GM12878 (cell line): ENCODE measurements at regions of chr7 and their contacts with region 1.

Region 1: DNA sequence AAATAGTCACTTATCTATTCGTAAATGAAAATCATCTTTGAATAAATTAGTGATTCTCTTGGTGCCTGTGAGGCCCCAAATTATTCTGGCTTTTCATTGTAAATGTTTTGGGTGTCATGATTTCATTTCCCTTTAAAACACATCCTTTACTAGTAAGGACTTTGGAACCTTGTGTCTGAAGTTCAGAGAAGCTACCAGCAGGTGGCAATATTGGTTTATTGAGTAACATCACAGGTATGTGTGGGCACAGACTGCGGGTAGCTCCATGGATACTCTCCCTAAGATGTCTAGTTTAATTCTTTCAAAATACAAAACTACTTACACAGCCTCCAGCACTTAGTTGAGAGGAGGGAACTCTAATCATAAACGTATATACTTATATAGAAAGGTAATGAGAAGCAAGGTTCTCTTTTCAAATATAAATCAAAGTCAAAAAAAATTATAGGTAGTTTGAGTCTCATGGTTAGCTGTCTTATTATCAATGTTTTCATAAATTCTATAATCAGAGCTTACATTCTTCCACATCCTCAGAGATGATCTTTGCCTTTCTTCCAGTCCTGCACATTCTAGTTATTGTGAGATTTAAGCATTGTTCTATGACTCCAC is 449.6 kb downstream of the GRM8 start:
- DNase-seq: peak; percentile 53
- ATAC-seq: peak; percentile 98
- H3K4me3 ChIP-seq: no peak overlapping the region
- H3K27ac ChIP-seq: no peak overlapping the region
- H3K4me1 ChIP-seq: no peaks in the 10 kb centered on the region
- H3K27me3 ChIP-seq: no peaks in the 10 kb centered on the region
- CTCF ChIP-seq: peak; percentile 63 to 78 (median 73)
- EP300 ChIP-seq: no peak
- POLR2A ChIP-seq: no peak
- RAD21 ChIP-seq: peak; percentile 86

Region 2: GRCh38 chr7:126150278-126150958 is 652.7 kb before region 1 on chr7:
- CTCF ChIA-PET with region 1: no interaction called
- POLR2A ChIA-PET with region 1: no interaction called
- RAD21 ChIA-PET with region 1: no interaction called
- SMC1A ChIA-PET with region 1: no interaction called
- in situ Hi-C with region 1: no loop called
- intact Hi-C with region 1: no loop called
- DNase-seq: no peak
- ATAC-seq: no peak
- H3K4me3 ChIP-seq: no peak overlapping the region
- H3K27ac ChIP-seq: no peak overlapping the region
- H3K4me1 ChIP-seq: no peaks in the 10 kb centered on the region
- H3K27me3 ChIP-seq: no peaks in the 10 kb centered on the region
- CTCF ChIP-seq: no peak
- EP300 ChIP-seq: no peak
- POLR2A ChIP-seq: no peak
- RAD21 ChIP-seq: no peak

Region 3: GRCh38 chr7:126436213-126436868 is 366.8 kb before region 1 on chr7:
- CTCF ChIA-PET with region 1: no interaction called
- POLR2A ChIA-PET with region 1: no interaction called
- RAD21 ChIA-PET with region 1: no interaction called
- SMC1A ChIA-PET with region 1: no interaction called
- in situ Hi-C with region 1: no loop called
- intact Hi-C with region 1: no loop called
- DNase-seq: no peak
- ATAC-seq: no peak
- H3K4me3 ChIP-seq: no peak overlapping the region
- H3K27ac ChIP-seq: no peak overlapping the region
- H3K4me1 ChIP-seq: no peaks in the 10 kb centered on the region
- H3K27me3 ChIP-seq: no peaks in the 10 kb centered on the region
- CTCF ChIP-seq: no peak
- EP300 ChIP-seq: no peak
- POLR2A ChIP-seq: no peak
- RAD21 ChIP-seq: no peak

Region 4: DNA sequence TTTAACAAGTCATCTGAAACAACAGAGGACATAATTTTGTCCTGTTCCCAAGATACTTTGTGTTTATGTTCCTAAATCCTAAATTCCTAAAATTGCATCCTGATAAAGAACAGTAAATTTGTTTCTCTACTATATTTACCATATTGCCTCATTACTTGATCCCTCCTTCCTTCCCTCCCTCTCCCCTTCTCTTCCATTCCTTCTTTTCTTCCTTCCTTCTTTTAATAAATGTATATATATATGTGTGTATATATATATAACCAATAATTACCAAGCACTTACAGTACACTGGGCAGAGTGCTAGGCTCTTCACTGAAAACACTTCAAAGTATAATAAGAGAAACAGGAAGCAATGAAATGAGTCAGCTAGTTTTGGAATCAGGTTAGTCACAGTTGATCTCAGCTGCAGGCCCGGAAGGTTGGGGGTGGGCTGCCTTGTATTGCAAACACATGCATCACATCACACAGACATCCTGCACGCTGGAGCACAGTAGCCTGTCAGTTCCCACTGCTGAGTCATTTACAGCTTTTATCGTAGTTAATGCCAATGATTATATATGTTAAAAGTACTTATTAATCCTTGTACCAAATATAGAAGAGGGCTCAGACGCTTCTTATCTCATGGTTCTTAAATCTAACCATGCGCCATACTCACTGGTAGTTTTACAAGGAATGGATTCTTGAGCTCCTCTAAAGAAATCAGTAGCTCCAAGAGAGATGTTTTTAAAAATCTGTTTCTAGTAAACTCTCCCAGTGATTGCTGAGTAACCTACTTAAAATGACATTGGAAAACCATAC is 102.2 kb before region 1 on chr7:
- CTCF ChIA-PET with region 1: interaction called, 13 read pairs
- POLR2A ChIA-PET with region 1: no interaction called
- RAD21 ChIA-PET with region 1: interaction called, 15 read pairs
- SMC1A ChIA-PET with region 1: interaction called, 26 read pairs
- in situ Hi-C with region 1: no loop called
- intact Hi-C with region 1: loop called (anchors 2 kb)
- DNase-seq: peak; percentile 98
- ATAC-seq: peak; percentile 89
- H3K4me3 ChIP-seq: 0 out of 2 replicates have a peak overlapping the region, but pooled peaks have one; percentile 35
- H3K27ac ChIP-seq: peak overlapping the region; percentile 96
- H3K4me1 ChIP-seq: peaks cover 31% of the 10 kb centered on the region
- H3K27me3 ChIP-seq: no peaks in the 10 kb centered on the region
- CTCF ChIP-seq: no peak
- EP300 ChIP-seq: peak; percentile 97 to 99
- POLR2A ChIP-seq: peak; percentile 77
- RAD21 ChIP-seq: peak; percentile 28

Region 5: DNA sequence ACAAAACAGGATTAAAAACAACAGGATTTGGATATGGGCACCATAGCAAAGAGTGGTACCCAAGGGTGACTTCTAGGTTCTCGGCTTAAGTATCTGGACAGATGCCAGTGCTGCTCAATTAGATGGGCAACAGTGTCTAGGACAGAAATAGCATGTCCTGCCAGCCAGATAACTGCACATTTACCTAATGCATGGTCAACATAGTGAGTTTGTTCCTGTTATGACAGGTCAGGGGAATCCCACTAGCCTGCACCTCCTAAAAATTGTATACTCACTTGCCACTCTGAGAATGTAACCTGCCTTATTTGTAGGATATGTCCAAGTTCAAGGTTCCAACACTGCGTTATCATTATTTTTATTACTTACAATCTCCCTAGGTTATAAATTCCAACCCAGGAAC is 22.2 kb before region 1 on chr7:
- CTCF ChIA-PET with region 1: interaction called, 17 read pairs
- POLR2A ChIA-PET with region 1: no interaction called
- RAD21 ChIA-PET with region 1: no interaction called
- SMC1A ChIA-PET with region 1: interaction called, 3 read pairs
- in situ Hi-C with region 1: no loop called
- intact Hi-C with region 1: no loop called
- DNase-seq: peak; percentile 39
- ATAC-seq: peak; percentile 95
- H3K4me3 ChIP-seq: no peak overlapping the region
- H3K27ac ChIP-seq: no peak overlapping the region
- H3K4me1 ChIP-seq: no peaks in the 10 kb centered on the region
- H3K27me3 ChIP-seq: no peaks in the 10 kb centered on the region
- CTCF ChIP-seq: no peak
- EP300 ChIP-seq: no peak
- POLR2A ChIP-seq: no peak
- RAD21 ChIP-seq: no peak

Region 6: GRCh38 chr7:126996659-126997058 is 193.5 kb after region 1 on chr7:
- CTCF ChIA-PET with region 1: no interaction called
- POLR2A ChIA-PET with region 1: no interaction called
- RAD21 ChIA-PET with region 1: no interaction called
- SMC1A ChIA-PET with region 1: no interaction called
- in situ Hi-C with region 1: no loop called
- intact Hi-C with region 1: no loop called
- DNase-seq: no peak
- ATAC-seq: no peak
- H3K4me3 ChIP-seq: no peak overlapping the region
- H3K27ac ChIP-seq: no peak overlapping the region
- H3K4me1 ChIP-seq: no peaks in the 10 kb centered on the region
- H3K27me3 ChIP-seq: no peaks in the 10 kb centered on the region
- CTCF ChIP-seq: no peak
- EP300 ChIP-seq: no peak
- POLR2A ChIP-seq: no peak
- RAD21 ChIP-seq: no peak

Region 7: DNA sequence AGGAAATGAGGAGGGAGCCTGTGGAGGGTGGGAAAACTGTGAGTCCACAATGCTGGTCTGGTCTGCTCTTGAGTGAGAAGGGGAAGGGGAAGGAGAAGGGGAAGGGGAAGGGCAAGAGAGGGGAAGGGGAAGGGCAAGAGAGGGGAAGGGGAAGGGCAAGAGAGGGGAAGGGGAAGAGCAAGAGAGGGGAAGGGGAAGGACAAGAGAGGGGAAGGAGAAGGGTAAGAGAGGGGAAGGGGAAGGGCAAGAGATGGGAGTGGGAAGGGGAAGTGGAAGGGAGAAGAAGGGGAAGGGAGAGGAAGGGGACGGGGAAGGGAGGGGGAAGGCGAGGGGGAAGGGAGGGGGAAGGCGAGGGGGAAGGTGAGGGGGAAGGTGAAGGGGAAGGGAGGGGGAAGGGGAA is 236.4 kb after region 1 on chr7:
- CTCF ChIA-PET with region 1: no interaction called
- POLR2A ChIA-PET with region 1: no interaction called
- RAD21 ChIA-PET with region 1: no interaction called
- SMC1A ChIA-PET with region 1: no interaction called
- in situ Hi-C with region 1: no loop called
- intact Hi-C with region 1: no loop called
- DNase-seq: no peak
- ATAC-seq: no peak
- H3K4me3 ChIP-seq: no peak overlapping the region
- H3K27ac ChIP-seq: no peak overlapping the region
- H3K4me1 ChIP-seq: no peaks in the 10 kb centered on the region
- H3K27me3 ChIP-seq: no peaks in the 10 kb centered on the region
- CTCF ChIP-seq: no peak
- EP300 ChIP-seq: no peak
- POLR2A ChIP-seq: no peak
- RAD21 ChIP-seq: no peak

Region 8: DNA sequence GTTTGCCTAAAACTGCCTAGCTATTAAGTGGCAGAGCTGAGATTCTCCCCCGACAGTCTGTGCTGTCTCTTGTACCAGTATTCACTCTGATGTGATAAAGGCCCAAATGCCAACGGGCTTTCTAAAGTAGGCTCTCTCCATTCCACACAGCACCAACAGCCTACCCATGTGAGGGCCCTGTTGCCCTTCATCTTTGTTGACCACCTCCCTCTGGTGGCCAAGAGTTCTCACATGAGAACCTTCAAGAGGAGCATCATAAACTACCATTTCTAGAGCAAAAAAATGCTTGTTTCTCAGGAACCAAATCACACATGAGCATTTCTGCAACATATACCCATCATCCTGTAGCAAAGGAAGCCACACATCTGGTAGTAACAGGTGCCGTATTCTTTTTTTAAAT is 263.8 kb after region 1 on chr7:
- CTCF ChIA-PET with region 1: no interaction called
- POLR2A ChIA-PET with region 1: no interaction called
- RAD21 ChIA-PET with region 1: interaction called, 3 read pairs
- SMC1A ChIA-PET with region 1: no interaction called
- in situ Hi-C with region 1: no loop called
- intact Hi-C with region 1: loop called (anchors 1 kb)
- DNase-seq: no peak
- ATAC-seq: peak; percentile 57; the same call in 2 of the 3 replicates
- H3K4me3 ChIP-seq: no peak overlapping the region
- H3K27ac ChIP-seq: no peak overlapping the region
- H3K4me1 ChIP-seq: no peaks in the 10 kb centered on the region
- H3K27me3 ChIP-seq: no peaks in the 10 kb centered on the region
- CTCF ChIP-seq: 0 out of 6 replicates have a peak, but pooled peaks of 1 of the 3 experiments have one; percentile 16
- EP300 ChIP-seq: no peak
- POLR2A ChIP-seq: no peak
- RAD21 ChIP-seq: 0 out of 2 replicates have a peak, but pooled peaks have one; percentile 18

Region 9: DNA sequence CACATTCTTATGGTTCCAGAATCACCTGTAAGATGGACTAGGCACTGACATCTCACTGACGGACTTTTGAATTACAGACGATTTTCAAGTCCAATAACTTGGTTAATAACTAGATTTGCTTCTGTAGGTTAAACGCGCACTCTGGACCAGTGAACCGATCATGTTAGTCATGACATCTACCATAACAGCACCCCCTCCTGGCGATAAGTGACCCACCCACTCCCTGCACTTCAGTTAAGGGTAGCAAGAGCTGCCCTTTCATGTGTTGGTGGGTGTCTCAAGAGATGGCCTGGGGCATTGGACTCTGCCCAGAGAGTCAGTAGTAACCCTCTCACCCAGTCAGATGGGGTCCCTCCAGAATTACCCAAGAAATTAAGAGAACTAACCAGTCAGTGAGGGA is 436.7 kb after region 1 on chr7:
- CTCF ChIA-PET with region 1: interaction called, 7 read pairs
- POLR2A ChIA-PET with region 1: no interaction called
- RAD21 ChIA-PET with region 1: no interaction called
- SMC1A ChIA-PET with region 1: no interaction called
- in situ Hi-C with region 1: no loop called
- intact Hi-C with region 1: loop called (anchors 5 kb)
- DNase-seq: no peak
- ATAC-seq: peak; percentile 54; the same call in 2 of the 3 replicates
- H3K4me3 ChIP-seq: no peak overlapping the region
- H3K27ac ChIP-seq: no peak overlapping the region
- H3K4me1 ChIP-seq: no peaks in the 10 kb centered on the region
- H3K27me3 ChIP-seq: peaks cover 0 to 2% of the 10 kb centered on the region in 2 experiments; a peak in 1 of 4 replicates
- CTCF ChIP-seq: peak in 2 of 3 experiments; percentile 22 to 35; a peak in 4 of 6 replicates
- EP300 ChIP-seq: no peak
- POLR2A ChIP-seq: no peak
- RAD21 ChIP-seq: no peak

Region 10: DNA sequence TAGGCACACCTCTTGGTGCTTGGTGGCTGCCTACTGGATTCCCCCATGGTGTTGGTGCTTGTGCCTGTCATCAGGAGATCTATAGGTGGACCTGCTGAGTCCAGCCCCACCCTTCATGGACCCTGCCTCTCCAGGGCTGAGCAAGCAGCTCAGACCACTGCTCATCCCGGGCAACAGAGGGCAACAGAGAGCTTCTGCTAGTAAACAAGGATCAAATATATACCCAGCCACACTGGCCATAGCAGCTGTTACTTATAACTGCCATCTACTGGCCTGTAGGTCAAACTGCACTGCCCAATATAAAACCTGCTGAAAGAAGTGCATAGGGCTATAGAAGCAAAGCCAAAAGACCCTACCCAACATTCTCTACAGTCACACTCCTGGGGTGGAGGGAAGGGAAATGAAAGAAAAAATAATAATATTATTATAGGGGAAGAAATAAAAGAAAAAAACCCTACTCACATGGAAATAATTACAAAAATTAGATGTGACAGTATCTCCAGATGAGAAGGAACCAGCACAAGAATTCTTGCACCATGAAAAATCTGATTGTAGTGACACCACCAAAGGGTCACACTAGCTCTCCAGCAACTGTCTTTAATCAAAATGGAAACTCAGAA is 644.3 kb after region 1 on chr7:
- CTCF ChIA-PET with region 1: interaction called, 7 read pairs
- POLR2A ChIA-PET with region 1: no interaction called
- RAD21 ChIA-PET with region 1: no interaction called
- SMC1A ChIA-PET with region 1: no interaction called
- in situ Hi-C with region 1: no loop called
- intact Hi-C with region 1: loop called (anchors 5 kb)
- DNase-seq: peak; percentile 28
- ATAC-seq: peak; percentile 100
- H3K4me3 ChIP-seq: no peak overlapping the region
- H3K27ac ChIP-seq: no peak overlapping the region
- H3K4me1 ChIP-seq: no peaks in the 10 kb centered on the region
- H3K27me3 ChIP-seq: no peaks in the 10 kb centered on the region
- CTCF ChIP-seq: peak; percentile 64 to 85 (median 77)
- EP300 ChIP-seq: no peak
- POLR2A ChIP-seq: no peak
- RAD21 ChIP-seq: peak; percentile 87